Natural killer cell (primary cell): ENCODE measurements at regions of chr2 and their contacts with region 1.

Region 1: GRCh38 chr2:210171309-210172203 is at the start of gene KANSL1L:
- DNase-seq: peak; percentile 98
- ATAC-seq: peak; percentile 80 to 95 (median 88)
- H3K4me3 ChIP-seq: peak within 1 kb of the TSS; percentile 83
- H3K4me3 Mint-ChIP-seq: peak within 1 kb of the TSS; percentile 100
- H3K27ac ChIP-seq: peak within 1 kb of the TSS; percentile 98
- H3K27ac Mint-ChIP-seq: peak within 1 kb of the TSS; percentile 98 to 99
- H3K4me1 ChIP-seq: peaks cover 13% of the 10 kb centered on the region
- H3K4me1 Mint-ChIP-seq: peaks cover 21 to 22% of the 10 kb centered on the region in 2 donors
- H3K27me3 ChIP-seq: no peaks in the 10 kb centered on the region
- H3K27me3 Mint-ChIP-seq: no peaks in the 10 kb centered on the region
- CTCF ChIP-seq: no peak
- total RNA-seq, gene KANSL1L: 7.6 to 11.2 (median 9.5) TPM

Region 2: DNA sequence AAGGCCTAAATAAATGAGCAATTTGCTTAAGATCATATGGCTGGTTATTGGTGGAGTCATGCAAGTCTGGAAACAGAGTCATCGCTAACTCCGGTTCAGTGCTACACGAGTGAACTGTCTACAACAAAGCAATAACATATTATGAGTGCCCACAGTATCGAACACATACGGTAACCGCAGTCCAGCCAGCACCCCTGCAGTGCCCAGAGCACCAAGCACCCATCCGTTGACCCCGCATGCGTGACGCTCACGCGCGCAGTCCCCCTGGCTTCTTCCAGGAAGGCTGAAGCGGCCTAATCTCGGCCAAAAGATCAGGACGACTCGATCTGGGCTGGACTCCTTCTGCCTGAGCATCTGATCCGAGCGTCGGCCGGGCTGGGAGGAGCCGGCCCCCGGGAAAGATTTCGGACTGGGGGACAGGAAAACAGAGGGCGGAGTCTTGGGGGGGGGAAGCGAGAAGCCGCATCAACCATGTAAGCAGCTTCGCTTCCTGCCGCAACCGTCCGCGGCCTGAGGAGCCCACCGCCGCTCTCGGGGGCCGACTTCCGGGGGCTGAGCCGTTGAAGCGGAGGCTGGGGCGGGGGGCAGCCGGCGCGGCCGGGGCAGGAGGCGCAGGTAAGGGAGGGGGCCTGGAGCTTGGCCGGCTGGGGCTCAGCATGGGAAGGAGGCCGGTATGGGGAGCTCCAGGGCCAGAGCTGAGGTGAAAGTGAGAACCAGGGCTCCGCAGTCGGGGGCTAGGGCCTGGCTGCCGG is 1905.6 kb before region 1 on chr2 and contains the start of gene PIKFYVE:
- intact Hi-C with region 1: loop called (anchors 5 kb)
- DNase-seq: peak; percentile 81 to 93
- ATAC-seq: peak; percentile 85 to 94 (median 89)
- H3K4me3 ChIP-seq: peak within 1 kb of the TSS; percentile 60
- H3K4me3 Mint-ChIP-seq: peak within 1 kb of the TSS; percentile 93
- H3K27ac ChIP-seq: peak within 1 kb of the TSS; percentile 75
- H3K27ac Mint-ChIP-seq: peak within 1 kb of the TSS; percentile 94 to 96
- H3K4me1 ChIP-seq: peaks cover 29% of the 10 kb centered on the region
- H3K4me1 Mint-ChIP-seq: peaks cover 30 to 48% of the 10 kb centered on the region in 2 donors
- H3K27me3 ChIP-seq: no peaks in the 10 kb centered on the region
- H3K27me3 Mint-ChIP-seq: no peaks in the 10 kb centered on the region
- CTCF ChIP-seq: no peak
- total RNA-seq, gene PIKFYVE: 38.9 to 48.7 (median 39.2) TPM

Region 3: DNA sequence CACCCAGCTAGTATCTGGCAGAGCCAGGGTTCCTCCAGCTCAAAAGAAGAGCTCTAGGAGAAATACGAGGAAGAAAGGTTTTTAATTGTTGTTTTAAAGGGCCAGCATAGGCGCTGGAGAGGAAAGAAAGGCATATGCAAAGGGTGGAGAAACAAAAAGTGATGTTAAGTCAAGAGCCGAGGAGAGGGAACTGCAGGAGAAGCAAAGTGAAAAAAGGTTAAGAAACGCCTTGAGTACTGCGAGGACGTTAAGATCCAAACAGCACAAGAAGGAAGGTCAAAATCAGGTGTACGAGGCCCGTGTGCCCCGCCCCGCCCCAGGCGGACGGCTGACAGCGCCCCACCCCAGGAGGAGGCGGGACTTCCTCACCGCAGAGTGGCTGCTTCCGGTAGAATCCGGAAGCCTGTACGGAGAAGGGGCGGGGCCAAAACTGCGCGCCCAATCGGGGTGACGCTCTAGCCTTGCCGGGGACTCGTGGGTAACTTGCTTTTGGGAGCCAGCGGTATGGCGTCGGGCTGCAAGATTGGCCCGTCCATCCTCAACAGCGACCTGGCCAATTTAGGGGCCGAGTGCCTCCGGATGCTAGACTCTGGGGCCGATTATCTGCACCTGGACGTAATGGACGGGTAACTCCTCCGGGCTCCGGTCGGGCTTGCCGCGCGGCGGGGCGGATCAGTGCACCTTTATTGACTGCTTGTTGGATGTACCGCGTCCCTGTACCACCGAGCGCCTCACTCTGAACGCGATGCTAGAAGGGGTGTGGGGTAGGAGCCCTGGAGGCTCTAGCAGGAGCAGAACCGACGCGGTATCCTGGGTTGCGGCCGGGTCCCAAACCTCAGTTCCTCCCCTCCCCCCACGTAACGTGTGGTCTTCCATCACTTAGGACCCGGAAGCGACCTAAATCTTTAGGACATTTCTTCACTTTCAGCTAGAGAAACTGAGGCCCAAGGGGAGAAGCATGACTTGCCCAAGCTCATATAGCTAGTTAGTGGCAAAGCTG is 169.1 kb before region 1 on chr2 and contains the start of gene RPE:
- intact Hi-C with region 1: loop called (anchors 1 kb)
- DNase-seq: peak; percentile 97 to 99
- ATAC-seq: peak; percentile 98 to 99 (median 99)
- H3K4me3 ChIP-seq: peak within 1 kb of the TSS; percentile 71
- H3K4me3 Mint-ChIP-seq: peak within 1 kb of the TSS; percentile 84
- H3K27ac ChIP-seq: peak within 1 kb of the TSS; percentile 73
- H3K27ac Mint-ChIP-seq: peak within 1 kb of the TSS; percentile 77 to 87
- H3K4me1 ChIP-seq: peaks cover 17% of the 10 kb centered on the region
- H3K4me1 Mint-ChIP-seq: peaks cover 64% of the 10 kb centered on the region in 2 donors
- H3K27me3 ChIP-seq: no peaks in the 10 kb centered on the region
- H3K27me3 Mint-ChIP-seq: no peaks in the 10 kb centered on the region
- CTCF ChIP-seq: no peak
- total RNA-seq, gene RPE: 36.2 to 57.4 (median 52.4) TPM

Region 4: GRCh38 chr2:210476194-210477128 is 304.9 kb after region 1 on chr2 and contains the start of gene LANCL1:
- intact Hi-C with region 1: loop called (anchors 5 kb)
- DNase-seq: peak; percentile 74 to 86
- ATAC-seq: peak; percentile 99 to 100 (median 99)
- H3K4me3 ChIP-seq: peak within 1 kb of the TSS; percentile 84
- H3K4me3 Mint-ChIP-seq: peak within 1 kb of the TSS; percentile 98
- H3K27ac ChIP-seq: peak within 1 kb of the TSS; percentile 87
- H3K27ac Mint-ChIP-seq: peak within 1 kb of the TSS; percentile 91 to 99
- H3K4me1 ChIP-seq: peaks cover 21% of the 10 kb centered on the region
- H3K4me1 Mint-ChIP-seq: peaks cover 52 to 64% of the 10 kb centered on the region in 2 donors
- H3K27me3 ChIP-seq: no peaks in the 10 kb centered on the region
- H3K27me3 Mint-ChIP-seq: no peaks in the 10 kb centered on the region
- CTCF ChIP-seq: no peak
- total RNA-seq, gene LANCL1: 21.0 to 27.0 (median 24.4) TPM